Left cardiac atrium (tissue), 4 donors: ENCODE measurements at regions of chr1 and their contacts with region 1.

Region 1: DNA sequence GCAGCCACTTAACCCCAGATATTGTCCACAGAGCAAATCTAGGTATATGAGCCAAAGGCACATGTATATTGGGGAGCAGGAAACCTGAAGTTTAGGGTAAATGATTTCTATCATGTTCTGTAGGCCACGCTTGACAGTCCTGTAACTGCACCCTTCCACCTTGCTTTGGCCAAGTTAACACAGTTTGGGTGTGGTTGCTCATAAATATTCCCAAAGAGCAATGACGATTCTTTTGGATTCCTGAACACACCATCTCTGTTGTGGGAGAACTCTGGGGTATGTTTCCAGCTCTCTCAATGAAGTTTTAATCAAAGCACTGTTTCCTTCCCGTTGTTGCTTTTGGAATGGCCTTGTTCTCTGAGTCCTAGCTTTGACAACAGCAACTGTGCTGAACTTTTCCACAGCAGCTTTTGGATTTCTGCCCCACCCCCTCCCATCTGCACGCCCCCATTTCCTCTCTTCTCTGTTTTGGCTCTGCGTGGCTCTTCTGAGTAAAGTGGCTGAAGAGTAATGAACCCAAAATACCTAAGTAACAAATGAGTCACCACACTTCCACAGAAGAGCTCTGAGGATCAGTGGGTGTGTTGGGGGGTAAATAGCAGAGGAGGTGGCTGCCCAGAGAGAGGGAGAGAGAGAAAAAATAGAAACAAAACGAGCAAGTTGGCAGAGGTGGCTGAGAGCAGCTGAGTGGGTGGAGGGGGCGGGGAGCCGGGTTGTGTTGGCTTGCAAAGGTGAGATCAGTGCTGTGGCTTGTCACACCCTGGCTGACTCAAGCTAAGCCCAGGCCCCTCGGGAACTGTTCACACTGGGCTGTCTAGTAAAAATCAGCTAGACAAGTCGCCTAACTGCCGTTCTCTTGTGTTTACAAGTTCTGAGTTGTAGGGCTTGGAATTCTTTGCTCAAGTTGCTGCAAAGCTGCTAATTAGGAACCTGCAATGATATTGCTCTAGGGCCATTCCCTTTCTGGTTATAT is 26.9 kb upstream of the RAP1A start:
- DNase-seq: peak; percentile 90
- ATAC-seq: peak; percentile 92 to 97

Region 2: GRCh38 chr1:111516005-111516535 is 76.6 kb before region 1 on chr1:
- intact Hi-C with region 1: loop called in 1 of 2 experiments (anchors 5 kb)
- DNase-seq: peak; percentile 83
- ATAC-seq: peak; percentile 74 to 76

Region 3: DNA sequence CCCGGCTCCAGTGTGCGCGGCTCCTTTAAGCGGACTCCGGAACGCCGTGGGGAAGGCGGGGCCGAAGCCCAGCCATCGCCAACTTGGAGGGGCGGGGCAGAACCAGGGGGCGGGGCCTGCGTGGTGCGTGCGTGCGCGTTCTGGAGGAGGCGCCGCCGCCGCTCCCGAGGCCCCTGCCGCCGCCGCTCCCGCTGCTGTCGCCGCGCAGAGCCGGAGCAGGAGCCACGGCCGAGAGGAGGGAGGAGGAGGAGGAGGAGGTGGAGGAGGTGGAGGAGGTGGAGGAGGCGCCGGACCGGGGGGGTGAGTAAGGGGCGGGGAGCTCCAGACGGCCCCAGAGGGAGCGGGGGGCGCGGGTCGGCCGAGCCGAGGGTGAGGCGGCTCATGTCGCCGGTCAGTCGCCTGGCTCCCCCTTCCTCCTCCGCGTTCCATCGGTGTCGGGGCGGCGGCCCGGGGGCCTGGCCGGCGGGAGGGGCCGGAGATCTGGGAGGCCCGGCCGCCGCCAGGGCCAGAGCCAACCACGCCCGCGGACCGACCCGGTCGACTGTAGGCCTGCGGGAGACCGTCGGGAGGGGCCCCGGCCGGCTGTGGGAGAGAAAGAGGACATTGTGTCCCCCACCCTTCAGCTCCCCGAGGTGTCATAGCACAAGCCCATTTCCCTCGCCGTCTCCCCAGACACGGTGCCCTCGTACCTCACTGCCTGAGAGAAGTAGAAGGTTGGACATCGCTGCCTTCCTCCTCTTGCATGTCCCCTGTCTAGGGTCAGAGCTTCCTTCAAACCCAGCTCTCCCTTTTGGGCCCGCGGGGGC is 27.2 kb after region 1 on chr1 and contains the start of gene RAP1A:
- intact Hi-C with region 1: loop called in 1 of 2 experiments (anchors 1 kb)
- DNase-seq: peak; percentile 96
- ATAC-seq: peak; percentile 98
- total RNA-seq, gene RAP1A: 84.2 to 103 TPM